ENCODE measurements at regions of chr1 and their contacts with region 1.

Region 1: DNA sequence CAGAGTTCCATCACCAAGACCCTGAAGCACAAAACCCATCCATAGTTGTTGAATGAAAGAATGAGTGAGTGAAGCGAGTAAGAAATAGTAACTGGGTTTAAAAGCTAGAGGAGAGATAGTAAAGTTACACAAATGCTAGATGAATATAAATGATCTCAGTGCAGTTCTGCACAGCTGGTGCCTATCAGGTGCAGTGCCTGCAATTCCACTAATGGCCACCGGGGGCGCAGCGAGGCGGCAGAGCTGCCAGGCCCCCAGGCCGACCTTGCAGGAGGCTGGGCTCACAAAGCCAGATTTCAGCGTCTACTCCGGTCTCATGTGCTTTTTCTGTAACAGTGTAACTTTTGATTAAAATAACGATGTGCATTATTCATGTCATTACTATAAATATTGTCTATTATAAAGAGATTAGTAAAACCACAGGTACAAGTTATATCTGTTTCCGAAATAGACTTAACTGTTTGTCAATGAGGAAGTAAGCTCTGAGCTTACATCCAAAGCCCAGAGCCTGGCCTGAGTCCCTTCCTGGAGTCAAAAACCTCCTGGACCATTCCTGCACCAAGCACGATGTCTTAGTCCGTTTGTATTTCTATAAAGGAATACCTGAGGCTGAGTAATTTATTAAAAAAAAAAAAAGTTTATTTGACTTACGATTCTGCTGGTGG is 477.6 kb downstream of the NPHP4 start:
- DNase-seq: peak; percentile 80
- ATAC-seq: peak; percentile 85

Region 2: GRCh38 chr1:5562769-5563168 is 48.1 kb after region 1 on chr1:
- intact Hi-C with region 1: no loop called
- DNase-seq: no peak
- ATAC-seq: no peak

Region 3: DNA sequence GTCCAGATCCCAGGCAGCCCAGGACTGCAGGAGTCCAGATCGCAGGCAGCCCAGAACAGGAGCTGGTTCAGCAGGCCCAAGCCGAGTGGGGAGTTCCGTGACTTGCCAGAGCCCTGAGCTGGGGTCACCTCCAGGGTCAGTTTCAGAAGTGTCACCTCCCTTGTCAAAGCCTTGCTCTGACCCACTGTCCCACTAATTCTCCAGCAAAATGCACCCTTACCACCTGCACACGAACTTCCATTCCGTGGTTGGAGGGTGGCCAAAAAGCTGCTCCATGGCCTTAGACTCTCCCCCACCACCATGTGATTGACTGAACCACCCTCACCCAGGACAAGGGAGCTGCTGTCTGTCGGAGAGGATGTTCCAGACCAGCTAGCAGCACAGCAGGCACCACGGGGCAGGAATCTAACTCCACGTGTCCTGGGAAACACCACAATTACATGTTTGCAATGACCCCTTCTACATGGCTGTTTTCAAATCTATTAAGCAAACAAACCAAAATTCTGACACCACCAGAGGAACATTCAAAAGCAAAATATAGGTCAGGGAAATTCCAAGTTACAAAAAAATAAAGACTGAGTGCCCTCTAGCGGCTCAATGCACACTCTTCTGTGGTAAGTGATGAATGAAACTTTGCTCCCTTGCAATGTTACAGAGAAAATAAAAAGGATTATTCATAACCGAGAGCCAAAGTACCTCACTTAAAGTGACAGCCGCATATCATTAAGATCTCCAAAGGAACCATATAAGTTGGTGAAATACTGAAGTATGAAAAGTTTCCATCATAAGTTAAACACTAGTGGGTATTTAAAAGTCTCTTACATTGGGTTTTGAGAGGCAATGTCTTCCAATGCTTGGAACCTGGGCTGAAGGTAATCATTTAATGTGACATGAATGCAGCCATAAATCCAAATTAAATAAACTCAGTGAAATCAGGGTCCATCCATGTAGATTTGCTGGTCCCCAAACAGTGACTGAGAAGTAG is 401.2 kb after region 1 on chr1:
- intact Hi-C with region 1: loop called (anchors 5 kb)
- DNase-seq: no peak
- ATAC-seq: peak; percentile 45

Region 4: DNA sequence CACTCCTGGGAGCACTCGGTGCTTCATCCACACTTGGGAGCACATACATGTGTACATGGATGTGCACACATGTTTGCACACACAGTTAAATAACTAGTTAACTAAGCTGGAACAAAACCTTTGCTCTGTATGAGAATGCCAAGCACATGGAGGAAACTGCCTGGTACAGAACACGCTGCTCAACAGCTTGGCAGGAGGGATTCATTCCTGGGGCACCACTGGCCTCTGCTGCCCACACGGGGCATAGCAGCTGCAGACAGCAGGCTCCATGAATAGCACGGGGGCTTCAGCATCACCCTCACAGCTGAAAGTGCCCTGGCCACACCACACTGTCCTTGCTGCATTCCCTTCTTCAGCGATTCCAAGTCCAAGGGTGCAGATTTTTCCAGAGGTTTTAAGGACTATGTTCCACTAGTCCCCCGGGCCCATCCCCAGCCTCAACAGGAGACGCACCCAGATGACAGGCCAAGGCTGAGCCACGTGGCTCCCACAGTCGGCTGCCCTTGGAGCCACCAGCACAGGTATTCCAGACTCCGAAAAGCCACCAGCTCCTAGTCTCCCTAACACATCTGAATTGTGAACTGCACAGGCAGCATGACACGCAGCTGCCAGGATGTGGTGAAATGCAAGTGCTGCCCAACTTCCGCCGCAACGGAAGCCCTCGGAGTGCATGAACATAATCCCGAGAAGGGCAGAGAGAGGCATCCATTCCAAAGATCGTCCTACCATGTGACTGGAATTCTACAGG is 460.7 kb after region 1 on chr1:
- intact Hi-C with region 1: loop called (anchors 5 kb)
- DNase-seq: no peak
- ATAC-seq: peak; percentile 92